Breast epithelium (tissue), 4 donors: ENCODE measurements at regions of chr7 and their contacts with region 1.

Region 1: DNA sequence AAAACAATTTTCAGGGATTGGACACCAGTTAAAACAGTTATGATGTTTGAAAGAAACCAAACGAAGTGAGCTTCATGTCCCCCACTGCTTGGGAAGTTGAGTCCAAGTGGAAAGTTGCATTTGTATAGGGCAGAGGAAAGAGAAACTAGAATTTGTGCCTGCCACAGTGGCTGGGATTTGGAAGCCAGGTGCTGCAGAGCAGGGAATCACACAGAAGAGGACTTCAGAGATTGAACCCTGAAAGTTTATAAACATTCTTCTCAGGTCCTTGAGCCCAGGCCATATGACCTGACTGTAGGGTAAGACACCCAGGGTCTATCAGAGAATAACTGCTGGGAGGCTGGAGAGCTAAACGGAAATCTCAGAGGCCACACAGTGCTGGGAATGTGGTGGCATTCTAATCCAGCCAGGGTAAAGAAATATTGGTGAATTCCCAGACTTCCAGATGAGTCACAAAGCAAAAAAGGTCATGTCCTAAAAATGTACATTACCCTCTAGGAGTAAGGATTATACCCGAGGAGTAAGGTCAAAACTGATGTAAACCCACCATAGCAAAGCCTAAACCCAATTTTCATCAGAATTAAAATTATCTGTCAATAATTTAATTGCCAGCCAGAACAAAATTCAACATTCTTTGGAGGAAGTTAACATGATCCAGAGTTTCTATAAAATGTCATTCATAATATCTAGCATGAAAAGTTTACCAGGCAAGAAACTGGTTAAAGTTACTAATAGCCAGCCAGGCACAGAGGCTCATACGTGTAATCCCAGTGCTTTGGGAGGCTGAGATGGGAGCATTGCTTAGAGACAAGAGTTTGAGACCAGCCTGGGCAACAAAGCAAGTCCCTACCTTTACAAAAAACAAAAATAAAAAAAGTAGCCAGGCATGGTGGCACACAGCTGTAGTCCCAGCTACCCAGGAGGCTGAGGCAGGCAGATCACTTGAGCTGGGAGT is 31.2 kb downstream of the TOMM7 start:
- DNase-seq: no peak
- H3K4me3 ChIP-seq: no peak overlapping the region
- H3K27ac ChIP-seq: no peak overlapping the region
- H3K4me1 ChIP-seq: no peaks in the 10 kb centered on the region
- H3K27me3 ChIP-seq: no peaks in the 10 kb centered on the region
- CTCF ChIP-seq: no peak
- POLR2A ChIP-seq: no peak

Region 2: DNA sequence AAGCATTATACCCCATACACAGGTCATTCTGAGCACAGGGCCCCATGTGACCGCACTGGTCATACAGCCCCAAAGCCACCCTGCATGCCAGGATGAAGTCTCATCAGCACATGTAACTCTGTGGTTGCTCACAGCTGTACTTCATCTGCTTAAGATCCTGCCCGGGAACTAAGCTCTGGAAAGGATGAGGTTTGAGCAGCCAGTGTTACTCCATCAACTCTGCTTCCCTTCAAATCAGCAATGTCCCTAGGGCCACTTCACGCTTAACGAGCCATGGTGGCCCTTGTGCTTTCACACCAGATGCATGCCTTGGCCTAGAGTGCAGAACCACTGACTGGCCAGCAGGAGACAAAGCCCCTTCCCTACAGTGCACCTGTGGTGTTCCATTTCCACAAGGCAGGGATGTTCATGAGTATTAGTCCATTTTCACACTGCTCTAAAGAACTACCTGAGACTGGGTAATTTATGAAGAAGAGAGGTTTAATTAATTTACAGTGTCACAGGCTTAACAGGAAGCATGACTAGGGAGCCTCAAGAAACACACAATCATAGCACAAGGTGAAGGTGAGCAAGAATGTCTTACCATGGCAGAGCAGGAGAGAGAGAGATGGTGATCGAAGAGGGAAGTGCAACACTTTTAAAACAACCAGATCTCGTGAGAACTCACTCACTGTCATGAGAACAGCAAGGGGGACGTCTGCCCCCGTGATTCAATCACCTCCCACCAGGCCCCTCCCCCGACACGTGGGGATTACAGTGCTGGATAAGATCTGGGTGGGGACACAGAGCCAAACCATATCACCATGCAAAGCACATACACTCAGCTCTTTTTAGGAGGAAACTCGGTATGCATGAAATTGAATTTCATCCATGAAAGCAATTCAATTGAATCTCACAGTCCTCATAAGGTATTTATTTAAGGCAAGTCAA is 696.8 kb before region 1 on chr7:
- intact Hi-C with region 1: loop called (anchors 10 kb)
- DNase-seq: no peak
- H3K4me3 ChIP-seq: no peak overlapping the region
- H3K27ac ChIP-seq: no peak overlapping the region
- H3K4me1 ChIP-seq: no peaks in the 10 kb centered on the region
- H3K27me3 ChIP-seq: no peaks in the 10 kb centered on the region
- CTCF ChIP-seq: no peak
- POLR2A ChIP-seq: no peak

Region 3: GRCh38 chr7:22269963-22270362 is 521.5 kb before region 1 on chr7:
- intact Hi-C with region 1: no loop called
- DNase-seq: no peak
- H3K4me3 ChIP-seq: no peak overlapping the region
- H3K27ac ChIP-seq: no peak overlapping the region
- H3K4me1 ChIP-seq: no peaks in the 10 kb centered on the region
- H3K27me3 ChIP-seq: no peaks in the 10 kb centered on the region
- CTCF ChIP-seq: no peak
- POLR2A ChIP-seq: no peak